ENCODE measurements at regions of chr22 and their contacts with region 1.

Region 1: GRCh38 chr22:32796865-32797573 is 4.5 kb upstream of the TIMP3 start:
- DNase-seq: peak; percentile 71
- ATAC-seq: peak; percentile 61
- H3K4me3 Mint-ChIP-seq: no peak overlapping the region
- H3K27ac Mint-ChIP-seq: no peak overlapping the region
- H3K4me1 Mint-ChIP-seq: peaks cover 7% of the 10 kb centered on the region
- H3K27me3 Mint-ChIP-seq: peaks cover 33% of the 10 kb centered on the region
- CTCF ChIP-seq: peak; percentile 96

Region 2: DNA sequence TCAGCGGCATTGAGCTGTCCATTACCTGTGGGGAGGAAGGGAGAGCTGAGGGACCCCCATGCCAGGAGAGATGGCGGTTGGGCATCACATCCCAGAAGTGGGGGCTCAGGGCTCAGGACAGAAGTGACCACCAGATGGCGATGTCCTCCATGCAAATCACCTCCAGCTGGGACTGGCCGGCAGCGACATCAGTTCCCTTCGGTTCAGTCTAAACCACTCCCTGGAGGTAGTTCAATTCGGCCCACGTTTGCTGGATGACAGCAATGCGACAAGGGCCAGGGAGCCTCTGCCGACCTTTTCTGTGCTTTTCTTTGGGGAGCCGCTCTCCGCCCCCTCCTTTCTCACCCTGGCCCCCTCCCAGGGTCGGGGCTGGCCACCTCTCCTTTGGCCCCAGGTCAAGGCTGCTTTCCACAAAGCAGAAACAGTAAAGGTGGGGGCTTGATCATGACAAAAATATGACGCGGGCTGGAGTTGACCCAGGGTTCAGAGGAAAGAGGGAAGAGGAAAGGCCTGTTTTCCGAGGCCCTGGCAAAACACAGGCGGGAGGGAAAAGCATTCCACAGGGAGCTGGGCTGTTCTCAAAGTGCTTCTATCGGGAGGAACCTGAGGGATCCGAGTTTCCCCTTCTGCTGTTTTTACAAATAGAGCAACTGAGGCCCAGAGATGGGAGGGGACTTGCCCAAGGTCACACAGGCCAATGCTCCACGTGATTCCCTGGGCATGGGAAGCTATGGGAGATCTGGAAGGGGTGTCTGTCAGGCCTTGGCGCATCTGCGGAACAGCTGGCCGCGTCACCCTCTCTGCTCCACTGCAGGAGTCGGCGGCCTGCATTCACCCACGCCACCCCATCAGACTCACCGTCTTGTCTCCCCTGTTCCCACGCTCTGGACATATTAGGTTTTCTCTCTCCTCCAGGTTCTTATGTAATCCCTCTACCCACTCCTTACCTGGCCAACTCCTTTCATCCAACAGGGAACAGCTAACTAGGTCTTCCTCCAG is 267.7 kb before region 1 on chr22:
- CTCF ChIA-PET with region 1: interaction called, 73 read pairs
- POLR2A ChIA-PET with region 1: no interaction called
- DNase-seq: peak; percentile 88
- ATAC-seq: peak; percentile 25
- H3K4me3 Mint-ChIP-seq: no peak overlapping the region
- H3K27ac Mint-ChIP-seq: no peak overlapping the region
- H3K4me1 Mint-ChIP-seq: peaks cover 7% of the 10 kb centered on the region
- H3K27me3 Mint-ChIP-seq: no peaks in the 10 kb centered on the region
- CTCF ChIP-seq: peak; percentile 71; the same call in 1 of the 2 replicates

Region 3: DNA sequence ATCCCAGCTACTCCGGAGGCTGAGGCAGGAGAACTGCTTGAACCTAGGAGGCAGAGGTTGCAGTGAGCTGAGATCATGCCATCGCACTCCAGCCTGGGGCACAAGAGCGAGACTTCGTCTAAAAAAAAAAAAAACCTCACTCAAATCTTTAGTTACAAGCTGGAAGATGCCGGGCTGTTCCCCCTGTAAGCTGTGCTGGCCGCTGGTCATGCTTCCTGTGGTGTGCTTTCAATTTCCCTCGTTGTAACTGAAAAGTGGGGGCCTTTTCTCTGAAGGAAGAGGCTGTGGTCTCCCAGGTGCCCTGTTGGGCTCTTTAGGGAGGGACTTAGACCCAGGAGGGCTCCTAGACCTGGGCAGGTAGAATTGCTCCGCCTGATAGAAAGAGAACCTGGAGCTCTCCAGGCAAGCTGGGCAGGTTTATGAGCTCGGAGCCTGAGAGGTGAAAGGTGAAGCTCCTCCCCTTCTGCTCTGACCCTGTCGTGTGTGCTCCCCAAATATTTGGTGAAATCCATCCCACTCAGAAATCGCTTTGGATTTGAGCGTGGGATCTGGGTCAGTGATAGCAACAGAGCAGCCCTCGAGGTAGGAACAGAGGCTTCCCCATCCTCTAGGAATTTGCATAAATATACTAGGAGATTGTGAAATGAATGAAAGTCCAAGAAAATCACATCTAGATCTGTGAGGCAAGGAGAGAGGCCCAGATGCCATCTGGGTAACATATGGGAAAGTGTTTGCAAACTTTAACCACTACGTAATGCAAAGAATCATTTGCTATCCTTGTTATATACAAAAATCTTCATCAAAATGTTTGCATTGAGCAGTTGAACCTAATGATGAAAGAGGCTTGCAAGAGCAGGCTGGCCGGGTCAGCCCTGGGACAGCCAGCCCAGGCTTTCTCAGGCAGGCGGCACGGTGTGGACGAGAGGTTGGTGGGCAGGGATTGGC is 168.1 kb before region 1 on chr22:
- CTCF ChIA-PET with region 1: interaction called, 27 read pairs
- POLR2A ChIA-PET with region 1: no interaction called
- DNase-seq: no peak
- ATAC-seq: peak; percentile 41; the same call in 1 of the 2 replicates
- H3K4me3 Mint-ChIP-seq: no peak overlapping the region
- H3K27ac Mint-ChIP-seq: 0 out of 2 replicates have a peak overlapping the region, but pooled peaks have one; percentile 65
- H3K4me1 Mint-ChIP-seq: peaks cover 10% of the 10 kb centered on the region
- H3K27me3 Mint-ChIP-seq: no peaks in the 10 kb centered on the region; the same call in 1 of the 2 replicates
- CTCF ChIP-seq: no peak

Region 4: DNA sequence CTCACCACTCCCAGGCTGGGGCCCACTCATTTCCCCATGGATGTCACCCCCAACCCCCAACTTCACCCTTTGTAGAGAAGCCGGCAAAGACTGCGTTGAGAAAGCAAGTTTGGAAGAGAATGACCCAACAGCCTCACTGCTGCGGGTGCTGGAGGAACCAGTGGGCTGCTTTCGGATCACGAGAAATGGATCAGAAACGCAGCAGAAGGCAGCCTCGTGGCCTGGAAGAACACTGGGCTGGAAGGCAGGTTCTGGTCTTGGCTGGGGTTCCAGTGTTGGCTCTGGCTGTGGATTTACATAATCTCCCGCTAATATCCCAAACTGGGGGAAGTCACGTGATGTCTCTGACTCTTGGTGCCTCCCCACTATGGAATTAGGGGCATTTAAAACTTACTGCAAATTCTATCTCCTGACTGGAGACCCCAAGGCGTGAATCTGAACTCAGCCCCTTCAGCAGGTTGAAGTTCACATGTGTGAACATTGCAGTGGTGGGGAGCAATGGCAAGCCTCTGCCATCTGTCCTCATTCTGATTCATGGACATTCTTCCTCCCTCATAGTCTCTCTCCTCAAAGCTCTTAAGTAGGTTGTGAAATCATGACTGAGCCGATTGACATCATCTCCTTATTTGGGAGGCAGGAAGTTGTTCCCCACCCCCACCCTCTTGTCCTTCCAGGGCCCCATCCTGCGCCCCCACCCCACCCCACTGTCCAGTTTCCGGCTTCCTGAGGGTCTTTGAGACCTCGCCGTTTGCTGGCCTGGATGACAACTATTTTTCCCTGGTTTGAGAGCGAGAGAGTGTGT is 32.5 kb before region 1 on chr22:
- CTCF ChIA-PET with region 1: interaction called, 16 read pairs
- POLR2A ChIA-PET with region 1: no interaction called
- DNase-seq: no peak
- ATAC-seq: 0 out of 2 replicates have a peak, but pooled peaks have one; percentile 20
- H3K4me3 Mint-ChIP-seq: no peak overlapping the region
- H3K27ac Mint-ChIP-seq: peak overlapping the region; percentile 32; the same call in 1 of the 2 replicates
- H3K4me1 Mint-ChIP-seq: peaks cover 21% of the 10 kb centered on the region
- H3K27me3 Mint-ChIP-seq: no peaks in the 10 kb centered on the region
- CTCF ChIP-seq: no peak

Region 5: DNA sequence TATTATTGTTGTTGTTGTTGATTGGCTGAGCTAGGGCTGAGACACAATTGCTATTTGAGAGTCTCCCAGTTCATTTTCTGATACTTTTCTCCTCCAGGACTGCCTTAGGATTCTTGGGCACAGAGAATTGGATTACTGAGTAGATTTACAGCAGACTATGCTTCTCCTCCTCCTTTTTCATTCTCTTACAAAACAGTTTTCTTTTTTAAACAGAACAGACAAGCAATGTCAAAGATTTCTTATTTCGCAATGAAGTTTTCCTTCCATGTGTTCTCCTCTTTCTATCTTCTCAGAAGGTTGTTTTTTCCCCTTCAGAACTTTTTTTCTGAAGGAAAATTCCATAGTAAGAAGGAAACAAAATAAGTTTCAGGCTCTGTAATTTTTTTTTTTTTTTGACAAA is 15.3 kb before region 1 on chr22:
- CTCF ChIA-PET with region 1: interaction called, 32 read pairs
- POLR2A ChIA-PET with region 1: no interaction called
- DNase-seq: no peak
- ATAC-seq: no peak
- H3K4me3 Mint-ChIP-seq: no peak overlapping the region
- H3K27ac Mint-ChIP-seq: no peak overlapping the region
- H3K4me1 Mint-ChIP-seq: peaks cover 17% of the 10 kb centered on the region
- H3K27me3 Mint-ChIP-seq: no peaks in the 10 kb centered on the region
- CTCF ChIP-seq: no peak

Region 6: GRCh38 chr22:32818146-32819115 is 21.4 kb after region 1 on chr22:
- CTCF ChIA-PET with region 1: interaction called, 53 read pairs
- POLR2A ChIA-PET with region 1: interaction called, 3 read pairs
- DNase-seq: no peak
- ATAC-seq: no peak; the same call in 1 of the 2 replicates
- H3K4me3 Mint-ChIP-seq: no peak overlapping the region
- H3K27ac Mint-ChIP-seq: peak overlapping the region; percentile 43; the same call in 1 of the 2 replicates
- H3K4me1 Mint-ChIP-seq: peaks cover 35% of the 10 kb centered on the region
- H3K27me3 Mint-ChIP-seq: no peaks in the 10 kb centered on the region
- CTCF ChIP-seq: no peak

Region 7: DNA sequence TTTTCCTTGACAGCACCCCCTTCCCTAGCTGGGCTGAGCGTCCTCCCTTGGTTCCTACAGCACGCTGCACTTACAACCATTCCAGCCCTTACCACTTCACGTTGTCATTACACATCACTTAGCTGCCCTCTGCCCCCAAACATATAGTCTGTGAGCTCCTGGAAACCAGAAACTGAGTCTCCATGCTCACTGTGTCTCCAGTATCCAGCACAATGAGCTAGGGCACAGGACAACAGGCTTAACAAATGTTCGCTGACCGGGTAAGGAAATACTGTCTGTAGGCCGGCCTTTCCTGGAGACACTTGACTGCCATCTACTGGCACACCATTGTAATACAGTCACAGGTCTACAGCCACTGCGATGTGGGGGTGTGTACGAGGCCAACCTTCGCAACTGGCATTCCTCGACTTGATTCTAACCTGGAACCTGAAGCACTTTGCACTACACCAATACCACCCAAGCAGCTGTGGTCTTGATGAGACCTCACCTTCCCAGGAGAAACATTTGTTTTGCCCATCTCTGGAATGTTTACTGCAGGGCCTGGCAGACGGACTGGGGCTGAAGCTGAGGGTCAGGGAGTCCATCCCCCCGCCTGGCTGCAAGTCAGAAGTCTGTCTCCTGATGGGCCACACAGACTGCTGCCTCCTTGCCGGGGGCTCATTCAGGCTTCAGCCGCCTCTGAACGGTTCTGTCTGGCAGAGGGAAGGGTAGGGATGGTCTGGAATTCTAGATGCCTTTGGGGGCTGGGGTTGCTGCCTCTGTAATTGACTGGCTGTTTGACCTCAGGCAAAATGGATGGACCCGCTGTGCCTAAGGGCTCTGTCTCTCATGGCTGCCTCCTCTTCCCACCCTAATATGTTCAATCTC is 189.1 kb after region 1 on chr22:
- CTCF ChIA-PET with region 1: interaction called, 17 read pairs
- POLR2A ChIA-PET with region 1: no interaction called
- DNase-seq: peak; percentile 81
- ATAC-seq: peak; percentile 95
- H3K4me3 Mint-ChIP-seq: no peak overlapping the region
- H3K27ac Mint-ChIP-seq: peak overlapping the region; percentile 75
- H3K4me1 Mint-ChIP-seq: peaks cover 23% of the 10 kb centered on the region
- H3K27me3 Mint-ChIP-seq: no peaks in the 10 kb centered on the region
- CTCF ChIP-seq: peak; percentile 66